Motor neuron (in vitro differentiated cells): ENCODE measurements at regions of chr4 and their contacts with region 1.

Region 1: DNA sequence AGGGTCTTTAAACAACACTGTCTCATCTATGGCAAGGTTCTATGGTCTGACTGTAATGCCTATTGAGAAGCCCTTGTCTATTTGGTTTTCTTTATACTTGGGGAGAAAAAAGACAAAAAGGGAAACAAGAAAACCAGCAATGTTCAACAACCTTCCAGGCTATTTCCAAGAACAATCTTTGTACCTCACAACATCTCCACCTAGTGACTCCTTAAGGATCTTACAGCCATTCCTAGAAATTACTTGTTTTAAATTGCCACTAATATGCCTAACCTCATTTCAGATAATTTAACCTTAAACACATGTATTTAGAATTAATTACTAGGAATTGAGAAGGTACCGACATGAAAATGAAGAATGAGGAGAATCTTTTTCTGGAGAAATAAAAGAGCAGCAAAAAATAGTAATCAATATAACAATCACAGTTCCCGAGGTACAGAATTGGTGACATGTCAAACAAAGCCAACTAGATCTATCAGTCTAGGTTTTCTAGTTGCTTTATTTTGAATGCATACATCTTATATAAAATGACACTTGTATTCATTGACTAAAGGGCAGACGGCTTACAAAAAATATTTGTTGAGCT is 1.6 kb upstream of the RBM46 start:
- ATAC-seq: peak in 3 of 8 experiments; percentile 46 to 60 (median 49)
- H3K4me3 ChIP-seq: no peak overlapping the region
- H3K27ac ChIP-seq: no peak overlapping the region
- H3K4me1 ChIP-seq: no peaks in the 10 kb centered on the region

Region 2: GRCh38 chr4:154626793-154627484 is 152.5 kb before region 1 on chr4:
- in situ Hi-C with region 1: loop called in 3 of 9 experiments (anchors 25 kb)
- ATAC-seq: peak; percentile 91 to 99 (median 99)
- H3K4me3 ChIP-seq: peak overlapping the region in 4 of 5 donors; percentile 12 to 23 (median 19)
- H3K27ac ChIP-seq: no peak overlapping the region
- H3K4me1 ChIP-seq: peaks cover 3 to 14% of the 10 kb centered on the region in 2 donors